ENCODE measurements at regions of chr15 and their contacts with region 1.

Region 1: GRCh38 chr15:64825431-64826294 is at the start of gene PIF1:
- DNase-seq: peak; percentile 98
- H3K4me3 Mint-ChIP-seq: peak within 1 kb of the TSS; percentile 92
- H3K27ac Mint-ChIP-seq: peak within 1 kb of the TSS; percentile 93
- H3K4me1 Mint-ChIP-seq: peaks cover 37% of the 10 kb centered on the region
- H3K27me3 Mint-ChIP-seq: no peaks in the 10 kb centered on the region
- total RNA-seq, gene PIF1: 20.9 and 22.6 TPM in 2 replicates

Region 2: GRCh38 chr15:64836023-64836536 is 10.4 kb after region 1 on chr15:
- intact Hi-C with region 1: loop called (anchors 1 kb)
- DNase-seq: peak; percentile 64
- H3K4me3 Mint-ChIP-seq: peak overlapping the region; percentile 60
- H3K27ac Mint-ChIP-seq: peak overlapping the region; percentile 62
- H3K4me1 Mint-ChIP-seq: peaks cover 39% of the 10 kb centered on the region
- H3K27me3 Mint-ChIP-seq: no peaks in the 10 kb centered on the region

Region 3: GRCh38 chr15:65156692-65157091 is 331.0 kb after region 1 on chr15:
- intact Hi-C with region 1: no loop called
- DNase-seq: no peak
- H3K4me3 Mint-ChIP-seq: no peak overlapping the region
- H3K27ac Mint-ChIP-seq: no peak overlapping the region
- H3K4me1 Mint-ChIP-seq: no peaks in the 10 kb centered on the region
- H3K27me3 Mint-ChIP-seq: no peaks in the 10 kb centered on the region

Region 4: DNA sequence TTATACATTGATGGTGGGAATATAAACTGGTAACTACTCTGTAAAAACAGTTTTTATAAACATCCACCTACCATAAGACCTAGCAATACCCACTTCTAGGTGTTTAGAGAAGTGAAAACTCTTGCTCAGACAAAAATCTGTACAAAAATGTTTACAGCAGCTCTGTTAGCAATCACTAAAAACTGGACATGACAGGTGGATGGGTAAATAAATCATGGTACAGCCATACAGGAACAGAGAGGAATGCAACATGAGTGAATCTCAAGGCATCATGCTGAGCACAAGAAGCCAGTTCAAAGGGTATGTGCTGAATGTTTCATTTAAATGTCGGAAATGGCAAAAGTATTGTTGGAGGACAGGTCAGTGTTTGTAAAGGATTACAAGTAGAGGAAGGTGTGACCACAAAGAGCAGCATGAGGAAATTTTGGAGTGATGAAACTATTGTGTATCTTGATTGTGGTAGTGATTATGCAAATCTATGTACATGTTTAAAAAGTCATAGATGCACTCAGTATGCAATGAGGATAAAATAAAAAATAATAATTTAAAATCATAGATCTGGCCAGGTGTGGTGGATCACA is 467.4 kb after region 1 on chr15:
- intact Hi-C with region 1: loop called (anchors 10 kb)
- DNase-seq: no peak
- H3K4me3 Mint-ChIP-seq: no peak overlapping the region
- H3K27ac Mint-ChIP-seq: no peak overlapping the region
- H3K4me1 Mint-ChIP-seq: peaks cover 26% of the 10 kb centered on the region
- H3K27me3 Mint-ChIP-seq: no peaks in the 10 kb centered on the region